ENCODE measurements at regions of chr10 and their contacts with region 1.

Region 1: GRCh38 chr10:91251430-91252056 is 31.1 kb downstream of the PCGF5 start:
- DNase-seq: peak; percentile 58
- H3K27ac ChIP-seq: no peak overlapping the region
- CTCF ChIP-seq: peak; percentile 94

Region 2: DNA sequence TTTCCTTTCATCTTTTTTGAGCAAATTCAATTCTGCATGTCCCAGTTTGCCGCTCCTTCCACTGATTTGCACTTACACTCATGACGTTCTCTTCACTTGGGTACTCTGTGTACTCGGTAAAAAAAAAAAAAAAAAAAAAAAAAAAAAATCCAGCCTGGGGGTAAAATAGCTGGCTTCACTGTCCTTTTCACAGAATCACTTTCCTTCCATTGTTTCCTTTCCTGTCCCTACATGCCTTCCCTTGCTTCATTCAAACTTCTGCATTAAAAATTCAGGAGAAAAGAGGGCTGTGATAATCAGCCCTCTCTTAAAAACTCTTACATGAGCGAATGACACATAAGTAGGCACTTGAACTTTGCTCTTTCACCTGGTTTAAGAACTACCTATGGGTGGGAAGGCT is 339.4 kb before region 1 on chr10:
- CTCF ChIA-PET with region 1: interaction called, 22 read pairs
- POLR2A ChIA-PET with region 1: no interaction called
- DNase-seq: peak; percentile 50
- H3K27ac ChIP-seq: no peak overlapping the region
- CTCF ChIP-seq: no peak

Region 3: DNA sequence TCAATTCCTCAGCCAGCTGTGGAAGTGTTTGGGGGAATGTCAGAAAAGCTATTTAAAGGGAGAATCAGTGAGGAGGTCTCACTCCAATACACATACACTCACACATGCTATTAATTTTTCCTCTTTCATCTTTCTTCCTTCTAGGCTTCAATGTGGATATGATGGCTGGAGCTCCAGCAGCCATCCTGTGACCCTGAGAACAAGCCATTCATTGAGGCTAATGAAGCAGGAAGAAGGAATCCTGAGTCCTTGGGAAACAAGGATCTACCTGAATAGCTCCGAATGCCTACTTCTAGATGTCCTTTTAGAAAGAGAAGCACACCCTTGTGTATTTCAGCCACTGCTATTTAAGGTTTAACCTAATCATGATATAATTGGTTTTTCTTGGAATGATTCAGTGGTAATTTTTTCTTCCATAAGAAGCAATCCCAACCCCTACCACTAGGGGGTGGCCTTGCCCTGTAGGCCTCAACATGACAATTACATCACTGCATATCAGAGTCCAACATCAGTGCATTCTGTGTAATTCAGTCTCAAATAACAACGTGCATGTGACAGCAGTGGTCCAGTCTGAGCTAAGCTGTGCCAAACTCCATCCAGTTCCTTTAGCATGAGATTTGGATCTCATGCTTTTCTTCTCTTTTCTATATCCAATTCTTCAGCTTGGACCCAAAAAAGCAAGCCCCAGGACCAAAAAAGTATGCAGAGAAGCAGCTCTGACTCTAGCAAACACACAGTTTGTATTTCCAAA is 245.4 kb before region 1 on chr10:
- CTCF ChIA-PET with region 1: interaction called, 17 read pairs
- POLR2A ChIA-PET with region 1: interaction called, 5 read pairs
- DNase-seq: peak; percentile 60
- H3K27ac ChIP-seq: no peak overlapping the region
- CTCF ChIP-seq: peak; percentile 78

Region 4: GRCh38 chr10:91088300-91089140 is 163.0 kb before region 1 on chr10:
- CTCF ChIA-PET with region 1: interaction called, 30 read pairs
- POLR2A ChIA-PET with region 1: no interaction called
- DNase-seq: peak; percentile 50
- H3K27ac ChIP-seq: no peak overlapping the region
- CTCF ChIP-seq: no peak

Region 5: DNA sequence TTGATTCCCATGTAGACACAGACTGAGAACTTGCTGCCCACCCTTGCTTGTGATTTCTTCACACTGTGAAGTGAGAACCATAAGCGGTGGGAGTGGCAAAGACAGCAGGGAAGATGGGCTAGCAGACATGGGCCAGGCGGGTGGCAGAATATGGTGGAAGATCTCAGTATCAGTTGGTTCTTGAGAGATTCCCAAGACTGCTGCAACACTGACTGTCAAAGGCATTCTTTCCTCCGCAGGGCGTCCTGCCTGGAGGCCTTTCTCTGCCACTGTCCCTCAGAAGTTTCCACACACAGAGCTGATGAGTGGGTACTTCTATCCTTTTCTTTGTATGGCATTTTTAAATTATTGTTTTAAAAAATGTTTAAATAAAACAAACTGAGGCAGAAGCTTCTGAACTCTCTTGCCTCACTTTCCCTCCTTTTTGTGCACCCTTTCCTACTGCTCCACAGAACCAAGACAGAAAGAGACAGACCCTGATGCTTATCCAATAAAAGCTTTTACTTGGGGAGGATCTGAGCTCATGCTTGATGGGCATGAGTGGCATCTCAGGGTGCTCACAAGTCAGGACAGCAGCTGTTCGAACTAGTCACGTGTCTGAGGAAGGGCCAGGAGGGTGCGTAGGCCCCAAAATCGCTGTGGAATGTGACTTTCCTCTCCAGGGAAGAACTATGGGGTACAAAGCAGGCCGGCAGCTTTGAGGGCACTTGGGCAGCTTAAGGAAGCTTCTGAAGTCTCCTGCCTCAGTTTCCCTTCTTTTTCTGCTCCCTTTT is 135.7 kb before region 1 on chr10:
- CTCF ChIA-PET with region 1: no interaction called
- POLR2A ChIA-PET with region 1: no interaction called
- DNase-seq: no peak
- H3K27ac ChIP-seq: no peak overlapping the region
- CTCF ChIP-seq: no peak

Region 6: DNA sequence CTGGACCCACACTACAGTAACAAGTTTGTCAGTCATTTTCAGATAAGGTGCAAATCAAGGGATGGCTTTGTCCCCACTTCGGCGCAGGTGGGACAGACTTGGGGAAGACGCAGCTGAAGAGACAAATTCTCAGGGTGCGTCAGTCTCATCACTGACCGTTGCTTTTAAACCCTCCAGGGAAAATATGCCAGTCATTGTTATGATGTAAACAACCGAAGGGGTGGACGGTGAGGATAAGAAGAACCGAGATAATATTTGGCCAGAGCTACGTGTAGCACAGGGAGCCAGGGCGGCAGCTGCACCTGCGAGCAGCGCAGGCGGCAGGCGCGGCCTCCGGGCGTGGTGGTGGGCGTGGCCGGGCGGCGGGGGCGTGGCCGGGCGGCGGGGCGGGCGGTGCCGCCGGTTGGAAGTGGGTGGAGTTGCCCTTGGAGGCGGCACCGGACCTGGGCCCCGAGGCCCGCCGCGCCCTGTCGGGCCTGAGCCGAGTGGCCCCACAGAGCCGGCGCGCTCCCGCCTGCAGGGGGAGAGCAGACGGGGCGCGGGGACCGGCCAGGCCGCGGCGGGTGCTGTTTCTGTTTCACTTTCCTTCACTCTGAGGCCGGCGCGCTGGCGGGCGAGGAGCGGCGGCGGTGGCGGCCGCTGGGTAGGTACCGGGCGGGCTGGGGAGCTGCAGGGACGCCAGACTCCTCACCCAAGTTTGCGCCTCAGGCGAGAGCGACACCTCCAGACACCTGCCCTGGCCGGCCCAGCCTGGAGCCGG is 31.2 kb before region 1 on chr10 and contains the start of gene PCGF5:
- CTCF ChIA-PET with region 1: interaction called, 10 read pairs
- POLR2A ChIA-PET with region 1: no interaction called
- DNase-seq: peak; percentile 93
- H3K27ac ChIP-seq: peak within 1 kb of the TSS; percentile 67
- CTCF ChIP-seq: peak; percentile 14; the same call in 1 of the 2 replicates

Measured in RWPE1 (cell line).